Activated T-helper 1 cell treated with anti-CD3 and anti-CD28 coated beads, Interleukin-12 subunit alpha, Interleukin-12 subunit beta, Interleukin-2, Interleukin-4 antibody, amounts not matched to agents 30 ng/mL and 10 ng/mL and 1 ng/mL, durations not matched to agents 14 hours and 24 hours and 36 hours (primary cell): ENCODE measurements at regions of chr10 and their contacts with region 1.

Region 1: GRCh38 chr10:7107285-7107684 is 303.5 kb downstream of the SFMBT2 start:
- DNase-seq: no peak
- H3K4me3 Mint-ChIP-seq: no peak overlapping the region
- H3K27ac Mint-ChIP-seq: peak overlapping the region; percentile 54
- H3K4me1 Mint-ChIP-seq: peaks cover 12% of the 10 kb centered on the region
- H3K27me3 Mint-ChIP-seq: peaks cover 7% of the 10 kb centered on the region

Region 2: DNA sequence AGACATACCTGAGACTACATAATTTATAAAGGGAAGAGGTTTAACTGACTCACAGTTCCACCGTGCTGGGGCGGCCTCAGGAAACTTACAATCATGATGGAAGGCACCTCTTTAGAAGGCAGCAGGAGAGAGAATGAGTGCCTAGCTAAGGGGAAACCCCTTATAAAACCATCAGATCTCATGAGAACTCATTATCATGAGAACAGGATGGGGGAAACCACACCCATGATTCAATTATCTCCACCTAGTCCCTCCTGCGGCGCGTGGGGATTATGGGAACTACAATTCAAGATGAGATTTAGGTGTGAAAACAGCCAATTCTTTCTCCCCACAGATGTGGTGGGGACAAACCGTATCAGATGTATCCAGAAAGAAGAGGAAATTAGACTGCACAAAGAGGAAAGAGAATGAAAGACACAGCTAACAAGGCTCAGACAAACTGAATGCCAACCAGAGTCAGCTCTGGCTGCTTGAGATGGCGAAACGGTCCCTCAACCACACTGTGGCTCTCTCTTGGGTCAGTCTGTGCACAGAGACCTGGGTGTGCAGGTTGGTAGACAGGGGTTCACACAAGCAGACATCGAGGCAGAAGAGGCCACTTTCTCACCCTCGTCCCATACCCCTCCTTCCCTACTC is 72.0 kb before region 1 on chr10:
- intact Hi-C with region 1: loop called (anchors 5 kb)
- DNase-seq: no peak
- H3K4me3 Mint-ChIP-seq: no peak overlapping the region
- H3K27ac Mint-ChIP-seq: peak overlapping the region; percentile 69
- H3K4me1 Mint-ChIP-seq: peaks cover 74% of the 10 kb centered on the region
- H3K27me3 Mint-ChIP-seq: peaks cover 5% of the 10 kb centered on the region

Region 3: DNA sequence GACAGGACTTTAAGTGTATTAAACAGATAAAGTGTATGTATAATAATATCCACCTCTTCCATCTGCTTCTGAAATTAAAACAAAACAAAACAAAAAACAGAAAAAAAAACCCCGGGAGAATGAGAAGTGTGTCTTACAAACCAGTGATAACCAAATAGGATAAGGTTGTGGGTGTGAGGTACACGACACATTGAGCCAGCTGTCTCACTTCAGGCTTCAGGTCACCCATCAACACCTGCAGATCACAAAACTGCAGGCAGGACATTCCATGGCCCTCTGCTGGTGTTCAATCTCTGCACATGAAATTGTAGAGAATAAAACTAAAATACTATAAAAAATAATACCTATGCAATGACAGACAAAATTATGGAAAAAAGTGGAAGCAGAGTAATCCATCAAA is 36.3 kb before region 1 on chr10:
- intact Hi-C with region 1: loop called (anchors 2 kb)
- DNase-seq: no peak
- H3K4me3 Mint-ChIP-seq: no peak overlapping the region
- H3K27ac Mint-ChIP-seq: no peak overlapping the region
- H3K4me1 Mint-ChIP-seq: no peaks in the 10 kb centered on the region
- H3K27me3 Mint-ChIP-seq: peaks cover 22% of the 10 kb centered on the region

Region 4: DNA sequence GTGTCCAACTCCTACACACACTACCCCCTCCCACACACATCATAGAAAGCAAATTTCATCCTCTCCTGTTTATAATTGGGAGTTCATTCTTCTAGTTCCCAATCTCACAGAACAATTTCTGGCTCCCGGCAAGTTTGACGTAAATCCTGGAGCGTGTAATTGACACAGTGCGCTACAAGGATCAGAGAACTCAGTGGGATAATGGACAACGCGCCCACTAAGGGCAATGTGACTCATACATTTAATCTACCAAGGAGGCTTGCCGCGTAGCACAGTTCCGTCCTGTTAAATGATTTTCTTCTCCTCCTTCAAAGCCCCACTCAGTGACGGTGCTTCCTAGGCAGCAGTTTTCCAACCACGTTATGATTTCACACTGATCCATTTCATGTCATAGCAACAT is 26.0 kb after region 1 on chr10:
- intact Hi-C with region 1: no loop called
- DNase-seq: no peak
- H3K4me3 Mint-ChIP-seq: no peak overlapping the region
- H3K27ac Mint-ChIP-seq: no peak overlapping the region
- H3K4me1 Mint-ChIP-seq: peaks cover 7% of the 10 kb centered on the region
- H3K27me3 Mint-ChIP-seq: peaks cover 32% of the 10 kb centered on the region

Region 5: DNA sequence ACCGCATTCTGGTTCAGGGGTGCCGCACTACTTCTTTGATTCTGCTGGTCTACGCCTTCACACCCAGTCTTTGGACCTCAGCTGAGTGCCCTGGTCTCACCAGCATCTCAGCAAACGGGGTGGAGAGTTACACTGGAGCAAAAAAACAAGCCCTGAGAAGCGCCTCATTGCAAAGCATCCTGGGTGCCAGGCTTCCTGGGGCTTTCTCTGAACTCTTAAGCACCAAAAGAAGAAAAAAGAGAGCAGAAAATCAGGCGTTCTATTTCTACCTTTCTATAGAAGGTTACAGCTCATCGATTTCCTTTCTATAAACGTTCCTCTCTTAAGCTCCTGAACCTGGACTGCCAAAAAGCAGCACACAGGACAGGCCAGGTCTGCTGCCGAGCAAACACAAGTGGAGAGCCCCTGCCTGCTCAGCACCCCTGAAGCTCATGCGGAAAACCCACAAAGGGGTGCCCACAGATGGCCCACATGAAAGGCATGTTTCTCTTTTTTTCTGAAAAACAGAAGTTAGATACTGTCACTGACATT is 85.6 kb after region 1 on chr10:
- intact Hi-C with region 1: loop called (anchors 1 kb)
- DNase-seq: peak; percentile 68
- H3K4me3 Mint-ChIP-seq: peak overlapping the region; percentile 76
- H3K27ac Mint-ChIP-seq: peak overlapping the region; percentile 97
- H3K4me1 Mint-ChIP-seq: peaks cover 73% of the 10 kb centered on the region
- H3K27me3 Mint-ChIP-seq: peaks cover 1% of the 10 kb centered on the region